ENCODE measurements at regions of chr1 and their contacts with region 1.

Region 1: DNA sequence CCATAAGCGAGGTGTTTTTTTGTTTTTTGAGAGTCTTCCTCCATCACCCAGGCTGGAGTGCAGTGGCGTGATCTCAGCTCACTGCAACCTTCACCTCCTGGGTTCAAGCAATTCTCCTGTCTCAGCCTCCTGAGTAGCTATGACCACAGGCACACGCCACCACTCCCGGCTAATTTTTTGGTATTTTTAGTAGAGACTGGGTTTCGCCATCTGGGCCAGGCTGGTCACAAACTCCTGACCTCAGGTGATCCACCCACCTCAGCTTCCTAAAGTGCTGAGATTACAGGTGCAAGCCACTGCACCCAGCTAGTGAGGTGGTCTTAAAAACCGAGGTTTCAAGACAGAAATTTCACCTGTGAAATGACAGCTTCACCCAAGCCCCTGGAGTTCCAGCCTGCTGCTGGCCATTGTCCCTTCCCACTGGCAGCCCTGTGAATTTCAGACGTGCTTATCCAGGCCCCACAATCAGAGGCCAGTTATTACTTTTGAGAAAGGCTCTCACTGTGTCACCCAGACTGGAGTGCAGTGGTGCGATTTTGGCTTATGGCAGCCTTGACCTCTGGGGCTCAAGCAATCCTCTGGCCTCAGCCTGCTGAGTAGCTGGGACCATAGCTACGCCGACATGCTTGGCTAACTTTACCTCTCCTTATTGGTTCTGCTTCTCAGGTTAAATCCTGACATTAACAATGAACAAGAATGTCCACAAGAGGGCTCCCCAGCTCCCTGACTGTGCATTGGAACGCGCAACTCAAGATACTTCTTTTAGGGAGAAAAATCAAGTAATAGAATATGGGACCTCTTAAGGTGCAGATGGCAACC is 19.4 kb downstream of the ENO1 start:
- DNase-seq: peak in 1 of 2 donors; percentile 54
- ATAC-seq: peak in 6 of 8 donors; percentile 21 to 57 (median 30)
- H3K4me3 ChIP-seq: no peak overlapping the region
- H3K27ac ChIP-seq: peak overlapping the region in 9 of 10 donors; percentile 8 to 83 (median 57)
- H3K4me1 ChIP-seq: peaks cover 2 to 45% (median 30%) of the 10 kb centered on the region in 9 donors
- H3K27me3 ChIP-seq: no peaks in the 10 kb centered on the region
- CTCF ChIP-seq: peak; percentile 45 to 73 (median 67)

Region 2: DNA sequence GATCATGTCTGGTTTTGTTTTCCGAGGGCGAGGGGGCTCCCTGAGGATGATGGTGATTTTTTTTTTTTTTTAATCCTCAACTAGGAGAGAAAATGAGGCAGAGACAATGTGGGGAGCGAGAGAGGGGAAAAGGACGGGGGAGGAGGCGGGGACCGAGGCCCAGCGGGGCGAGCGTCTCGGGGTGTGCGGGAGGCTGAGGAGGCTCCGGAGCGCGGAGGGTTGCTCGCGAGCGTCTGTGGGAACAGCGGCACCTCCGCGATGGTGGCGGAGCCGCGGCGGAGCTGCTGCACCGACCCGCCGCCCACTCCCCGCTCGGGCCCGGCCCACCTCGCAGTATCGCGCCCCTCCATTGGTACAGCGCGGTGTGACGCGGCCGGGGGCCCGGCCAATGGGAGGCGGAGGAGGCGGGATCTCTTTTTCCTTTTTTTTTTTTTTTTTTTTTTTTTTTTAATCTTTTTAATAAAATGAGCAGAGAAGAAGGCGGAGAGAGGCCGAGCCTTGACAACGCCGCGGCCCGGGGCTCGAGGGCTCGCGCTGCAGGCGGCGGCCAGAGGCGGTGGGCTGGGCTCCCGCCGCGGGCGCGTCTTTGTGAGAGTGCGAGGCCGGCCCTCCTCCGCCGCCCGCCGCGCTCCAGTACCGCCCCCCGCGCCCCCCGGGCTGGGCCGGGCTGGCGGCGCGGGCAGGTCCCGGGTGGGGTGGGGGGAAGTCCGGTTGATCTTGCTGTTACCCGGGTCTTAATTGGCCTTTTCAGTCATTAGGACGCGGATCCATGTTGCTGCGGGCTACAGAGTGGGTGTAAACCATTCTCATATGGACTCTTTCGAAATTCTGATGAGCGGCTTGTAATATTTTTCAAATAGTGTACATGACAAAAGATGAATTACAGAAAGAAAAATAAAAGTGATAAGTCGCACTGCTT is 41.4 kb before region 1 on chr1 and contains the start of gene RERE:
- intact Hi-C with region 1: loop called in 3 of 10 experiments (anchors 5 kb)
- DNase-seq: peak; percentile 93 to 96
- ATAC-seq: peak; percentile 98 to 99 (median 99)
- H3K4me3 ChIP-seq: peak within 1 kb of the TSS; percentile 37 to 89 (median 82)
- H3K27ac ChIP-seq: peak within 1 kb of the TSS; percentile 86 to 98 (median 94)
- H3K4me1 ChIP-seq: peaks cover 0 to 59% (median 42%) of the 10 kb centered on the region in 9 donors
- H3K27me3 ChIP-seq: no peaks in the 10 kb centered on the region
- CTCF ChIP-seq: peak in 5 of 9 donors; percentile 6 to 39 (median 23)
- total RNA-seq, gene RERE: 107 to 163 (median 144) TPM

Region 3: DNA sequence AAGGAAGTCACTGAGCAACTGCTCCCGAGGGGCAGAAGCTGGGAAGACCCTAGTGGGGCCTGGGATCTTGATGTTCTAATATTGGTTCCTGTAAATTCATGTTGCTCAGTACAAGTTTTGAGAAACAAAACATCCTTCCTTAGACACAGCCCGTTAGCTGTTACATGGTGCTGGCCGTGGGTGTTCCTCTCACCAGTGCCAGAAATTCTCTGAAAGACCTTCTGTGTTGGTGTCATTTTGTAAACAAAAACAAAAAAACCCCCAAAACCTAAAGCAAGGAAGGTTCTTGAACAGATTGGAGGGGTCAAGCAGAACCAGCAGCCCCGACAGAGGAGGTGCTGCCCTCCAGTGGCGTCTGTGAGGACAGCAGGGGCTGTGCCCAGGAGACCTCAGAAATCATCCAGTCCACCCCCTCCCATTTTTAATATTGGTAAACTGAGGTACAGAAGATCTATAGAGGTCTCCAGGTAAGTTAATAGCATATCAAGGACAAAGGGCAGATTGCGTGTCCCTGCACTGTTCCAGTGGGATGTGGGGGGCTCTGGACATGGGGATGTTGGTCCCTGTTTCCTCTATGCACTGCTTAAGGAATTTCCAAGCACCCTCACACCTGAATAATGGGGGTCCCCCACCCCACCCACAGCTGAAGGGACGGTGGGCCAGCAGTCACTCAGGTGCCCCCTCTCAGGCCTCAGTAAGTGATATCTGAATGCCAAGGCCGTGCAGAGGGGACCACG is 129.0 kb after region 1 on chr1:
- intact Hi-C with region 1: loop called in 1 of 10 experiments (anchors 5 kb)
- DNase-seq: peak; percentile 31 to 66
- ATAC-seq: peak in 7 of 8 donors; percentile 61 to 79 (median 70)
- H3K4me3 ChIP-seq: no peak overlapping the region
- H3K27ac ChIP-seq: peak overlapping the region in 1 of 10 donors; percentile 74
- H3K4me1 ChIP-seq: peaks cover 0 to 25% (median 8%) of the 10 kb centered on the region in 9 donors
- H3K27me3 ChIP-seq: no peaks in the 10 kb centered on the region
- CTCF ChIP-seq: peak; percentile 78 to 96 (median 92)

Region 4: DNA sequence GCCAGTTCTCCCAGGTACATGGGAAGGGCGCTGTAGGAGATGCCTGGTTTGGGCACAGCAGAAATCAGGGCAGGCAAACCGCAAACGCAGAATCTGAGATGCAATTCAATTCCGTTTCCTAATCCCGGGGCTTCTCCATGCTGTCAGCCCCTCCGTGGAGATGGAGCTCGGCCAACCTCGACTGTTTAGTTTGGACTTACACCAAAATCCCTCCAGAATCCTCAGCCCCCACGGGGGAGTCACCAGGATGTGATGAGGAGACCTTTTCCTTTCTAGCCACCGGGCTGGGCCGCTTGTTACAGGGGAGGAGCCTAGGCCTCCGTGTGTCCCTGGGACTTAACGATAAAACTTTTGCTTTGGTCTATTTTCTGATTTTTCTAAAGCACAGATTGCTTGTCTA is 159.2 kb after region 1 on chr1:
- intact Hi-C with region 1: no loop called
- DNase-seq: peak in 1 of 2 donors; percentile 29
- ATAC-seq: peak in 7 of 8 donors; percentile 34 to 84 (median 57)
- H3K4me3 ChIP-seq: peak overlapping the region in 1 of 10 donors; percentile 23
- H3K27ac ChIP-seq: peak overlapping the region in 2 of 10 donors; percentile 6 to 27
- H3K4me1 ChIP-seq: peaks cover 0 to 10% (median 0%) of the 10 kb centered on the region in 9 donors
- H3K27me3 ChIP-seq: peaks cover 0 to 2% (median 0%) of the 10 kb centered on the region in 7 donors
- CTCF ChIP-seq: no peak